ENCODE measurements at regions of chr6 and their contacts with region 1.

Region 1: DNA sequence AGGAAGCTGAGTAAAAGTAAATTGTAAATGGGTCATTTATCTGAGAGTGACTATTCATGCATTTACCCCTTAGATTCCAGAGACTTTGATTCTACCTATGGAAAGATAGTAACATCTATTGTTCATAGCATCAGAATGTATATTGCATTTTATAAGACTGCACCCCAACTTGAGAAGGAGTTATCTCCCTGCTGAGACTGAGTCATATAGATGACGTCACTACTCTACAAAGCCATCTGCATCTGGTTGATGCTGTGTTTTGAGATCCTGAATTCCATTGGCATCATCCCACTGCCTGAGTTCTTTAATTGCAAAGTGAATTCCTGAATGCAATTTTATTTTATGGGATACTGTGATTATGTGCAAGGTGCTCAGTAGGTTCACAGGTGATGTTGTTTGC is 444.0 kb upstream of the SLC35B3 start:
- DNase-seq: no peak
- H3K4me3 ChIP-seq: no peak overlapping the region
- CTCF ChIP-seq: no peak
- POLR2A ChIP-seq: no peak

Region 2: DNA sequence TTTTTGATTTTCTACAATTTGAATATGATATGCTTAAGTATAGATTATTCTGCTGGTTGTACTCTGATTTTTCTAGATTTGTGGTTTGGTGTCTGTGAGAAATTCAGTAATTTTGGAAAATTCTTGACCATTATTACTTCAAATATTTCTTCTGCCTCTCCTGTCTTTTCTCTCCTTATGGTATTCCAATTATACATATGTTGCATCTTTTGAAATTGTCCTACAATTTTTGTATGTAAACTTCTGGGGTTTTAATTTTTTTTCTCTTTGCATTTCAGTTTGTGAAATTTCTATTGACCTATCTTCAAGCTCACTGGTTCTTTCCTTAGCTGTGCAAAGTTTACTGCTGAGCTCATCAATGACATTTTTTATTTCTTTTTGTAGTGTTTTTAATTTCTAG is 90.4 kb after region 1 on chr6:
- intact Hi-C with region 1: no loop called
- DNase-seq: no peak
- H3K4me3 ChIP-seq: no peak overlapping the region
- CTCF ChIP-seq: no peak
- POLR2A ChIP-seq: no peak

Region 3: GRCh38 chr6:9044426-9044825 is 165.1 kb after region 1 on chr6:
- intact Hi-C with region 1: loop called (anchors 10 kb)
- DNase-seq: no peak
- H3K4me3 ChIP-seq: no peak overlapping the region
- CTCF ChIP-seq: no peak
- POLR2A ChIP-seq: no peak

Measured in lower leg skin (tissue), 4 donors.